ENCODE measurements at regions of chr1 and their contacts with region 1.

Region 1: GRCh38 chr1:158035976-158036583 is 42.6 kb downstream of the KIRREL1 start:
- DNase-seq: peak; percentile 69
- H3K4me3 ChIP-seq: no peak overlapping the region
- H3K27ac ChIP-seq: no peak overlapping the region
- H3K4me1 ChIP-seq: peaks cover 10% of the 10 kb centered on the region
- H3K27me3 ChIP-seq: no peaks in the 10 kb centered on the region
- CTCF ChIP-seq: peak; percentile 73 to 81 (median 75)
- POLR2A ChIP-seq: no peak

Region 2: DNA sequence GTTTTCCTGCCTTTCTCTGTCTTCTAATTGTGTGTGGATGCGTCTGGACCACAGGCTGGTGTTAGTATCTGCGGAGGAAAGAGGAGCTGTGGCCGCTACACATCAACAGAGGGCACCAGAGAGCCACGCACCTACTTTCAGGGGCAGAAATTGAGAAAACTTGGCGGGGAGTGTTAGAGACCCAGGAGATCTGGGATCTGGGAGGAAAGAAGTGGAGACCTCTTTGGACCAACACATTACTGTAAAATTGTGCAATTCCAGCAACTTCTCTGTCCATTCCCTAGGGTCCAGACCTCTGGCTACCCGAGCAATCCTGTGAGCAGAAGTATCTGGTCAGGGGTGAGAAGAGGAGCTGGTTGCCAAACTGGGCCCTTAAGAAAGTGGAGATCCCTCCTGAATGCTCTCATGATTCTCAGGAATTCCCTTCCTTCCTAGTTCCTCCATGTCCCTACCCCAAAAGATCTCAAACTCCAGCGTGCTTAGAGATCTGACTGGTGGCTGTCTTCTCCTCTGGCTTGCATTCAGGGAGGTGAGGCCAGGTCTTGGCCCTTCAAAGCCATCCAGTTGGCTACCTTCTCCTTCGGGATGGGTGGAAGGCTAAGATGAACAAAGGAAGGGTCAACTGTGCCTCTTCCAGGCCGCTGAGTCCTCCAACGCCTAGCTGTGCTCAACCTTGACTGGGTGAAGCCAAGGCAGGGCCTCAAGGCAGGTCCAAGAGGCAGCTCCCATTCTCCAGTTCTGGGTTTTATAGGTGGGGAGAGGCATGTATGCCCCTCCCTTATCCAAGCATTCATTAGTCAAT is 43.8 kb before region 1 on chr1:
- intact Hi-C with region 1: loop called (anchors 5 kb)
- DNase-seq: peak; percentile 87
- H3K4me3 ChIP-seq: no peak overlapping the region
- H3K27ac ChIP-seq: peak overlapping the region in 1 of 2 donors; percentile 12
- H3K4me1 ChIP-seq: peaks cover 32% of the 10 kb centered on the region
- H3K27me3 ChIP-seq: no peaks in the 10 kb centered on the region
- CTCF ChIP-seq: peak; percentile 79 to 88 (median 87)
- POLR2A ChIP-seq: no peak

Region 3: GRCh38 chr1:158177700-158178450 is 141.8 kb after region 1 on chr1:
- intact Hi-C with region 1: no loop called
- DNase-seq: peak; percentile 92
- H3K4me3 ChIP-seq: peak overlapping the region; percentile 42 to 46
- H3K27ac ChIP-seq: no peak overlapping the region
- H3K4me1 ChIP-seq: no peaks in the 10 kb centered on the region
- H3K27me3 ChIP-seq: no peaks in the 10 kb centered on the region
- CTCF ChIP-seq: no peak
- POLR2A ChIP-seq: no peak

Measured in testis (tissue), 5 donors.